Tibial artery (tissue), 4 donors: ENCODE measurements at regions of chr4 and their contacts with region 1.

Region 1: GRCh38 chr4:76758290-76758882 is 139.6 kb downstream of the SOWAHB start:
- DNase-seq: peak in 1 of 2 donors; percentile 32
- H3K4me3 ChIP-seq: no peak overlapping the region
- H3K27ac ChIP-seq: peak overlapping the region; percentile 74 to 75
- H3K4me1 ChIP-seq: peaks cover 0 to 56% (median 23%) of the 10 kb centered on the region in 4 donors
- H3K27me3 ChIP-seq: no peaks in the 10 kb centered on the region
- CTCF ChIP-seq: peak; percentile 66 to 75

Region 2: DNA sequence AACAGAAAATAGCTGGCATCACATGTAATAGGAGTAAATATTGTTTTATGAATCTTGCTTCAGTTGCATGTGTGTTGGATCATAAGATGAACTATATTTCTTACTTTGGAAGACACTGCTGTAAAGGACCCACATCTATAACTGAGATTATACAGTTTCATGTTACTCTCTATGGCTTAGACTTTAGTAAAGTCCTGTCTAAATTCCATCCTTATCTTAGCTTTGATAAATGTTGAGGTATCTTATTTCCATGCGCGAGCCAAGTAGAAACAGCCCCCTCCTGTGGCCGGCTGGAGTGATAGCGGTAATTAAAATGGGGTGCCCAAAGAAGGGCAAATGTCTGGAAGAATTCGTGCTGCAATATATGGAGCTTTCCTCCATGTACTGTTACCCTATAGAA is 380.5 kb before region 1 on chr4:
- intact Hi-C with region 1: no loop called
- DNase-seq: no peak
- H3K4me3 ChIP-seq: no peak overlapping the region
- H3K27ac ChIP-seq: no peak overlapping the region
- H3K4me1 ChIP-seq: peaks cover 0 to 24% (median 5%) of the 10 kb centered on the region in 4 donors
- H3K27me3 ChIP-seq: no peaks in the 10 kb centered on the region
- CTCF ChIP-seq: peak in 1 of 2 experiments; percentile 15

Region 3: GRCh38 chr4:77075869-77076799 is 317.7 kb after region 1 on chr4 and contains the start of gene CCNI:
- intact Hi-C with region 1: loop called (anchors 10 kb)
- DNase-seq: peak; percentile 94 to 97
- H3K4me3 ChIP-seq: peak within 1 kb of the TSS; percentile 77 to 100
- H3K27ac ChIP-seq: peak within 1 kb of the TSS; percentile 96 to 100
- H3K4me1 ChIP-seq: peaks cover 0 to 38% (median 12%) of the 10 kb centered on the region in 4 donors
- H3K27me3 ChIP-seq: no peaks in the 10 kb centered on the region
- CTCF ChIP-seq: peak in 1 of 2 experiments; percentile 4